ENCODE measurements at regions of chr7 and their contacts with region 1.

Region 1: GRCh38 chr7:55641273-55641691 is 69.0 kb upstream of the VOPP1 start:
- DNase-seq: peak; percentile 66
- H3K4me3 ChIP-seq: no peak overlapping the region; a peak in 1 of 4 replicates
- H3K27ac ChIP-seq: no peak overlapping the region
- H3K4me1 ChIP-seq: no peaks in the 10 kb centered on the region
- H3K27me3 ChIP-seq: no peaks in the 10 kb centered on the region; the same call in 1 of the 2 replicates
- CTCF ChIP-seq: peak; percentile 96
- EP300 ChIP-seq: no peak
- RAD21 ChIP-seq: peak; percentile 100

Region 2: GRCh38 chr7:55449205-55449991 is 191.9 kb before region 1 on chr7:
- CTCF ChIA-PET with region 1: no interaction called
- POLR2A ChIA-PET with region 1: no interaction called
- DNase-seq: no peak
- H3K4me3 ChIP-seq: no peak overlapping the region
- H3K27ac ChIP-seq: no peak overlapping the region
- H3K4me1 ChIP-seq: no peaks in the 10 kb centered on the region; a peak in 1 of 4 replicates
- H3K27me3 ChIP-seq: no peaks in the 10 kb centered on the region
- CTCF ChIP-seq: no peak
- EP300 ChIP-seq: no peak
- RAD21 ChIP-seq: no peak

Region 3: GRCh38 chr7:55629051-55629677 is 12.1 kb before region 1 on chr7:
- CTCF ChIA-PET with region 1: interaction called, 13 read pairs
- POLR2A ChIA-PET with region 1: no interaction called
- DNase-seq: no peak
- H3K4me3 ChIP-seq: no peak overlapping the region
- H3K27ac ChIP-seq: no peak overlapping the region
- H3K4me1 ChIP-seq: no peaks in the 10 kb centered on the region
- H3K27me3 ChIP-seq: peaks cover 5% of the 10 kb centered on the region; the same call in 1 of the 2 replicates
- CTCF ChIP-seq: no peak
- EP300 ChIP-seq: no peak
- RAD21 ChIP-seq: no peak

Region 4: DNA sequence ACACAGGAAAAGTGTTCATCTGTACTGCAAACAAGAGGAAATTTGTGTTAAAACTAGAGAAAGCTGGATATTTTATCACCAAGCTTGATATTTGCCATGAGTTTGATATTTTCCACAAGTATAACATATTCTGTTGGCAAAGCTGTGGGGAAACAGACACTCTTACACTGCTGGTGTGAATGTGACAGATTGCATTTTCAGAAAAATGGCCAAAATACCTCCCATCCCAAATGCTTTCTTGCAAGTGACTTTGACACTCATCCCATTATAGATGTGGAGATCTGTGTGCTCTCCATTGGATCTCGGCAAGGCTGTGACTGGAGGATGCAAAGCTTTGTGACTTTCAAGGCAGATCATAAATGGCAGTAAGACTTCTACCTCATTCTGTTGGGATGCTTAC is 276.5 kb after region 1 on chr7:
- CTCF ChIA-PET with region 1: no interaction called
- POLR2A ChIA-PET with region 1: no interaction called
- DNase-seq: no peak
- H3K4me3 ChIP-seq: no peak overlapping the region
- H3K27ac ChIP-seq: no peak overlapping the region
- H3K4me1 ChIP-seq: no peaks in the 10 kb centered on the region
- H3K27me3 ChIP-seq: no peaks in the 10 kb centered on the region
- CTCF ChIP-seq: no peak
- EP300 ChIP-seq: no peak
- RAD21 ChIP-seq: no peak

Measured in SK-N-SH (cell line).